ENCODE measurements at regions of chr2 and their contacts with region 1.

Region 1: DNA sequence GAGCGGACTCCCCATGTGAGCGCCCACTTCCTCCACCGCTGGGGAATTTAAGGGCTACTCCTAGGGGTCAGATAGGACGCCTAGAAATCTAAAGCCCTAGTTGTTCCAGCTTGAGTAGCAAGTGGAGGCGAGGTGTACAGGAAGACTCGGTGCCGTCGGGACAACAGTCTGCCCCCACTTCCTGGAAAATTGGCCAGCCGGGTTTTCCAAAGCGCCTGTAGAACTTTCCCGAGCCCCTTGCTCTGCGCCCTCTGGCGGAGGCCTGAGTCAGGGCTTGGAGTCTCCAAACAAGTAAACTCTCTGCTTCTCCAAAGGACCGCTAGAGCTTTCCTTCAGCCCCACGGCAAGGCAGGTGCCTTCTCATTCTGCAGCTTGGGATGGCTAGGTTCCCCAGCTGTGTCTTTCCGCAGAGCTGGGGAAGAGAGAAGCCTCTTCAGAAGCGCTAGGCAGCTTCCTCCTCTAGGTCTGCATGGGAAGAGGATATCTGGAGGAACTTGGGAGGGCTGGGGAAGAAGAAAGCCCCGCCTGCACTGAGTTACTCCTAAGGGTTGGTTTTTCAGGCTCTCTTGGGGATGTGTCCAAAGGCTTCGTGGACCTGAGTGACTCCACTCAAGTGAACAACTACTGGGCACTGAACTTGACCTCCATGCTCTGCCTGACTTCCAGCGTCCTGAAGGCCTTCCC is 688 bp downstream of the SPR start:
- DNase-seq: peak; percentile 75 to 88
- ATAC-seq: peak; percentile 85 to 87
- H3K4me3 ChIP-seq: peak overlapping the region; percentile 60 to 88 (median 76)
- H3K27ac ChIP-seq: peak overlapping the region; percentile 82 to 96 (median 89)
- H3K4me1 ChIP-seq: peaks cover 12 to 33% of the 10 kb centered on the region in 2 donors
- H3K27me3 ChIP-seq: no peaks in the 10 kb centered on the region
- CTCF ChIP-seq: peak; percentile 77 to 94 (median 83)
- POLR2A ChIP-seq: no peak

Region 2: DNA sequence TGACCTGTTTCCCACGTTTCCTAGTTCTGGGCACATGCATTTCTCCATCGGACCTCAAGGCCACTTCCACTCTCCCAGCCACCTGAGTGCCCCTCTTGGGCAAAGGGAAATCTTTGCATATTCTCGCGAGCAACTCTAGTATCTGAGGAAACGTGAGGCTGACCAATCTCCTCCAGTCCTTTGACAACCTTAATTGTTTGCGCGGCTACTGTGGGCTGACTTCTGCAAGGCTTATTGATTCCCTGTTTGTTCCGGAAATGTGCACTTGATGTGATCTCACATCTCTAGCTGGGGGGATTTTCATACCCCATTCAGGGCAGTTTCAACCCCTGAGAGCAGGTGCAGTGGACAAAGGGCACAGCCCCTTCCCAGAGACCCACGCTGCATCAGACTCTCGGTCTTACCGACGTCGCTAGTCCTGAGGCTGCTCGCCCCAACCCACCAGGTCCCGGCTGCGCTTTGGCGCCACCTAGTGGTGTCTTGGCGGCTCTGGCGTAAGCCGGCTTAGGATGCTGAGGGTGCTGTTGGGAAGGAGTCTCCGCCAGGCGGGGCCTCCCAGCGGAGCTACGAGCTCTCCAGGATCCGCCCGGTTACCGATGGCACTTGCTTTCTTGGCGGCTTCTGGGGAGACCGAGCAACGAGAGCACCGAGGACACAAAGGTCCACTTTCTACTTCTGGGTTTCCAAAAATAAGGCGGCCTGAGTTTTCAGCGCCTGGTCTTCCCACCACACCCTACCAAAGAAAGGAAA is 25.5 kb before region 1 on chr2:
- in situ Hi-C with region 1: no loop called
- intact Hi-C with region 1: loop called (anchors 1 kb)
- DNase-seq: peak; percentile 62 to 78
- ATAC-seq: peak; percentile 96 to 99
- H3K4me3 ChIP-seq: peak overlapping the region in 3 of 4 donors; percentile 20 to 37 (median 29)
- H3K27ac ChIP-seq: no peak overlapping the region
- H3K4me1 ChIP-seq: peaks cover 0 to 8% of the 10 kb centered on the region in 2 donors
- H3K27me3 ChIP-seq: peaks cover 4 to 11% (median 8%) of the 10 kb centered on the region in 3 donors
- CTCF ChIP-seq: peak; percentile 81 to 99 (median 88)
- POLR2A ChIP-seq: no peak

Region 3: GRCh38 chr2:72924353-72925240 is 36.7 kb after region 1 on chr2:
- in situ Hi-C with region 1: no loop called
- intact Hi-C with region 1: no loop called
- DNase-seq: peak in 1 of 2 donors; percentile 10
- ATAC-seq: peak in 1 of 2 donors; percentile 12
- H3K4me3 ChIP-seq: no peak overlapping the region
- H3K27ac ChIP-seq: no peak overlapping the region
- H3K4me1 ChIP-seq: peaks cover 0 to 20% of the 10 kb centered on the region in 2 donors
- H3K27me3 ChIP-seq: peaks cover 90 to 95% (median 94%) of the 10 kb centered on the region in 3 donors
- CTCF ChIP-seq: no peak
- POLR2A ChIP-seq: no peak

Region 4: DNA sequence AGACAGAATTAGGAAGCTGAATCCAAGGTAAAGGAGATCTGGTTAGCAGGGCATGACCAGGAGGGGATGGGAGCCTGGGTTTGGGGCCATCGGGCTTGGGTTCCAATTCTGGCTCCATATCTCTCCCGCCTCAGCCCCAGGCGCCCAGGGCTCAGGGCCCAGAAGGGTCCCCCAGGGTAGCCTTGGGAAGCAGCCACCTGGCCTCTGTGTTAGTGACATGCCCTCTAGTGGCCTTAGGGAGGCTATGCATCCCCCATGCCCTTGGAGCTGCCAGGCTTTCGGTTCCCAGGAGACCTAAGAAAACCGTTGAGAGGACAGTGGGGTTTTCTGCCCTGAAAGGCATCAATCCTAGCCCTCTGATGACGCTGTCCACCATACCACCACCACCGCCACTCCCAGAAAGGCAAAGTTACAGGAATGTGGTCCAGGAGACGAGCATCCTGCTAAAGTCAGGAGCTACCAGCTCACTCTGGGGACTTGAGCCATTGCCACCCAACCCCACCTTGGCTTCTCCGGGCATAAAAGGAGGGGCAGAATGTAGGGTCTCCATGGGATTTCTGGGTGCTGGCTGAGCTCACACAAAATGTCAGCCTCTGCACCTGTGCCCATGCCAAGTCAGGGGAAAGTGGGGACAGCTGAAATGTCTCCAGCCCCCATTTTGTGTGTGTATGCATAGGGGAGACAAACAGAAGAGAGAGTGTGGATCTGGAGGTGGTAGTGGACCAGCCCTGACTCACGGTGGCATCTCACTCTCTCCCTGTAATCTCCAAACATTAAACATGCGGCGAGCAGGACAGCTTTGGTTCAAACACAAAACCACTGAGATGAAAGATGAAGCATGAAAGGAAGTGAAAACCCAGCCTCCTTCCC is 85.9 kb after region 1 on chr2:
- in situ Hi-C with region 1: no loop called
- intact Hi-C with region 1: loop called (anchors 10 kb)
- DNase-seq: no peak
- ATAC-seq: peak; percentile 55 to 73
- H3K4me3 ChIP-seq: no peak overlapping the region
- H3K27ac ChIP-seq: no peak overlapping the region
- H3K4me1 ChIP-seq: peaks cover 0 to 20% of the 10 kb centered on the region in 2 donors
- H3K27me3 ChIP-seq: no peaks in the 10 kb centered on the region
- CTCF ChIP-seq: peak; percentile 12 to 64 (median 52)
- POLR2A ChIP-seq: no peak

Region 5: GRCh38 chr2:73163483-73164367 is 275.8 kb after region 1 on chr2:
- in situ Hi-C with region 1: loop called in 1 of 4 experiments (anchors 25 kb)
- intact Hi-C with region 1: loop called (anchors 2 kb)
- DNase-seq: peak; percentile 16 to 32
- ATAC-seq: peak; percentile 63 to 81
- H3K4me3 ChIP-seq: no peak overlapping the region
- H3K27ac ChIP-seq: no peak overlapping the region
- H3K4me1 ChIP-seq: no peaks in the 10 kb centered on the region
- H3K27me3 ChIP-seq: no peaks in the 10 kb centered on the region
- CTCF ChIP-seq: peak; percentile 68 to 88 (median 78)
- POLR2A ChIP-seq: no peak

Measured in gastrocnemius medialis (tissue), 4 donors.